CD4-positive, alpha-beta memory T cell (primary cell): ENCODE measurements at regions of chr6 and their contacts with region 1.

Region 1: GRCh38 chr6:150395398-150396009 is 26.7 kb downstream of the IYD start:
- DNase-seq: peak in 4 of 5 donors; percentile 14 to 33 (median 22)
- H3K4me3 ChIP-seq: no peak overlapping the region
- H3K4me3 Mint-ChIP-seq: no peak overlapping the region
- H3K27ac ChIP-seq: no peak overlapping the region
- H3K27ac Mint-ChIP-seq: no peak overlapping the region
- H3K4me1 ChIP-seq: no peaks in the 10 kb centered on the region
- H3K4me1 Mint-ChIP-seq: peaks cover 0 to 1% (median 0%) of the 10 kb centered on the region in 4 donors
- H3K27me3 ChIP-seq: no peaks in the 10 kb centered on the region
- H3K27me3 Mint-ChIP-seq: peaks cover 3 to 11% of the 10 kb centered on the region in 2 donors

Region 2: GRCh38 chr6:150079604-150080003 is 315.9 kb before region 1 on chr6:
- CTCF ChIA-PET with region 1: interaction called, 28 read pairs
- POLR2A ChIA-PET with region 1: no interaction called
- intact Hi-C with region 1: loop called (anchors 1 kb)
- DNase-seq: peak; percentile 55 to 67 (median 58)
- H3K4me3 ChIP-seq: no peak overlapping the region
- H3K4me3 Mint-ChIP-seq: peak overlapping the region; percentile 14 to 81 (median 68)
- H3K27ac ChIP-seq: no peak overlapping the region
- H3K27ac Mint-ChIP-seq: peak overlapping the region in 6 of 7 donors; percentile 25 to 86 (median 69)
- H3K4me1 ChIP-seq: peaks cover 23% of the 10 kb centered on the region
- H3K4me1 Mint-ChIP-seq: peaks cover 14 to 26% (median 23%) of the 10 kb centered on the region in 4 donors
- H3K27me3 ChIP-seq: no peaks in the 10 kb centered on the region
- H3K27me3 Mint-ChIP-seq: peaks cover 10 to 22% of the 10 kb centered on the region in 2 donors

Region 3: DNA sequence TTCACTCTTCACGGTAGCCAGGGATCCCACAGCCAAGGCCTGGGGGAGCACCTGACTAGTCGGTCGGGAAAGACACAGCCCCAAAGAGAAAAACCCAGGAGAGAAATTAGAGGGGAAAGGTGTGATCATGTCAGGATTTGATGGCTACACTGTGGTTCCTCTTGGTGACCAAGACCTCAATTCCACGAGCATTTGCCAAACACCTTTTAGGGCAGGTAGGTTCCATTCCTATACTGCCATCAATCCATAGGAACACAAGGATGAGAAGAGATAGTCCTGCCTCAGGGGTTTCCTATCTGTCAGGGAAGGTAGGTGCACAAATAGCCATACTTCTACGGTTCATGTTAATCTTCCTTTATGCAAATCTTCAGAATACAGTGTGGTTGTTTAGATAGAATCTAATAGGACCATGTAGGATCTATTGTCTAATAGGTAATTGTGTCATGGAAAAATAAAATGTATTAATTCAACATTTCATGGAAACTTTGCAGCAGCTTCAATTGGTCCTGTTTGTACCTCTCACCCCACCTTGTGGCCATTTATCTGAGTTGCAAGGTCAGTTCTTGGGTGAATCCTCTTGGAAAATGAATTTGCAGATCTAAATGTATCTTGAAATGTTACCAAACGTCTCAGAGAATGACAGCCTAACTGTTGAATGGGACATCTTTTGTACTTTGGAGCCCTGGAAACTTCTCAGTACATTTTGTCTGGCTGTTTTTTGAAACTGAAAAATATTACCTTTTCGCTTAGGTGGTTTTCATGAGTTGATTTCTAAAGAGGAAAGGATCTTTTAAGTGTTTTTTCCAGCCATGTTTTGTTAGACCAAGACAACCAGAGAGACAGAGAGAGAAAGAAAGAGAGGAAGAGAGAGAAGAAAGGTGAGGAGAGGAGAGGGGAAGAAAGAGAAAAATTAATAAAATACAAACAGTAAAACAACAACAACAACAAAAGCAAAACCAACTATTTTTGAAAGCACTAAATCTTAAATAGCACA is 60.4 kb before region 1 on chr6:
- CTCF ChIA-PET with region 1: no interaction called
- POLR2A ChIA-PET with region 1: no interaction called
- intact Hi-C with region 1: no loop called
- DNase-seq: peak in 4 of 5 donors; percentile 15 to 35 (median 22)
- H3K4me3 ChIP-seq: no peak overlapping the region
- H3K4me3 Mint-ChIP-seq: no peak overlapping the region
- H3K27ac ChIP-seq: no peak overlapping the region
- H3K27ac Mint-ChIP-seq: no peak overlapping the region
- H3K4me1 ChIP-seq: no peaks in the 10 kb centered on the region
- H3K4me1 Mint-ChIP-seq: peaks cover 0 to 3% (median 0%) of the 10 kb centered on the region in 4 donors
- H3K27me3 ChIP-seq: no peaks in the 10 kb centered on the region
- H3K27me3 Mint-ChIP-seq: peaks cover 0 to 6% of the 10 kb centered on the region in 2 donors

Region 4: DNA sequence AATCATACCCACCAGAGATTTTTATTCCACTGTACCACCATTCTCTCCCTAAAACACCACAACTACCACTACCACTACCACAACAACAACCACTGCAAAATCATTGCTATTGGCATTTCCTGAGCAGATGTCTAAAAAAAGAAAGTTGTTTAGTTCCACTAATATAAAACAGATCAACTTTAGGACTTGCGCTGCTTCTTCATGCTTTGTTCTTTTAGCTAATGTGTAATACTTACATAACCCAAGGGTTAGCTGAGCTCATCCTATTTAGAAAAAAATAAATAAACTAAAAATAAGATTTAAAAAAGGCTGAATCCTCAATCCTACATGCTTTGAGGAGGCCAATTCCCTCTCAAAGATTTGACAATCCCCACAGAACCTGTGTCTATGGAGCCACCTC is 15.2 kb before region 1 on chr6:
- CTCF ChIA-PET with region 1: interaction called, 30 read pairs
- POLR2A ChIA-PET with region 1: no interaction called
- intact Hi-C with region 1: no loop called
- DNase-seq: no peak
- H3K4me3 ChIP-seq: no peak overlapping the region
- H3K4me3 Mint-ChIP-seq: no peak overlapping the region
- H3K27ac ChIP-seq: no peak overlapping the region
- H3K27ac Mint-ChIP-seq: no peak overlapping the region
- H3K4me1 ChIP-seq: no peaks in the 10 kb centered on the region
- H3K4me1 Mint-ChIP-seq: no peaks in the 10 kb centered on the region
- H3K27me3 ChIP-seq: no peaks in the 10 kb centered on the region
- H3K27me3 Mint-ChIP-seq: peaks cover 12 to 17% of the 10 kb centered on the region in 2 donors

Region 5: DNA sequence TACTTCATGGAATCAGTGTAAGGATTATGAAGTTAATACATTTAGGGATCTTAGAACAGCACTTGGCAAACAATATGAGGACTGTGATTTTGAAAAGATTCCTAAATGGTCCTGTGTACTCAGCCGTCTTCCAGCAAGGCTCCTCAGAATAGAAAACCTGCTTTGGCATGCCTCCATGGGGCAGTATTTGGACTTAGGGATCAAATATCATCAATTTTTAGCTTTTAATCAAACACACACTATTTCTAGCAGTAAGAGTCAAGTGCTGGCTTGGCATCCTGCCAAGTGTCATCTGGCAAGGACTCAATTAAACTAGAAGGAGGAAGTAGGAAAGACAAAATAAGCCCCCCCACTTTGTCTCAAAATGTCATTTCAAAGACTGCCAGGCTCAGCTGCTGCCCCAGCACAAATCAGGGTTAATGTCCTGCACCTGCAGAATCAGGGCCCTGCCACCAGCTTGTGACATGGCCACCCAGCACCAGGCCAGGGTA is 14.1 kb after region 1 on chr6:
- CTCF ChIA-PET with region 1: interaction called, 15 read pairs
- POLR2A ChIA-PET with region 1: no interaction called
- intact Hi-C with region 1: no loop called
- DNase-seq: no peak
- H3K4me3 ChIP-seq: no peak overlapping the region
- H3K4me3 Mint-ChIP-seq: no peak overlapping the region
- H3K27ac ChIP-seq: no peak overlapping the region
- H3K27ac Mint-ChIP-seq: no peak overlapping the region
- H3K4me1 ChIP-seq: no peaks in the 10 kb centered on the region
- H3K4me1 Mint-ChIP-seq: no peaks in the 10 kb centered on the region
- H3K27me3 ChIP-seq: no peaks in the 10 kb centered on the region
- H3K27me3 Mint-ChIP-seq: peaks cover 19 to 29% of the 10 kb centered on the region in 2 donors

Region 6: GRCh38 chr6:150417899-150418826 is 22.7 kb after region 1 on chr6:
- CTCF ChIA-PET with region 1: interaction called, 20 read pairs
- POLR2A ChIA-PET with region 1: no interaction called
- intact Hi-C with region 1: no loop called
- DNase-seq: peak; percentile 44 to 53 (median 51)
- H3K4me3 ChIP-seq: peak overlapping the region; percentile 8 to 25
- H3K4me3 Mint-ChIP-seq: peak overlapping the region; percentile 69 to 89 (median 78)
- H3K27ac ChIP-seq: no peak overlapping the region
- H3K27ac Mint-ChIP-seq: peak overlapping the region in 2 of 7 donors; percentile 0 to 19
- H3K4me1 ChIP-seq: peaks cover 9% of the 10 kb centered on the region
- H3K4me1 Mint-ChIP-seq: peaks cover 4 to 22% (median 14%) of the 10 kb centered on the region in 4 donors
- H3K27me3 ChIP-seq: no peaks in the 10 kb centered on the region
- H3K27me3 Mint-ChIP-seq: peaks cover 12 to 21% of the 10 kb centered on the region in 2 donors